IMR-90 (cell line): ENCODE measurements at regions of chr19 and their contacts with region 1.

Region 1: DNA sequence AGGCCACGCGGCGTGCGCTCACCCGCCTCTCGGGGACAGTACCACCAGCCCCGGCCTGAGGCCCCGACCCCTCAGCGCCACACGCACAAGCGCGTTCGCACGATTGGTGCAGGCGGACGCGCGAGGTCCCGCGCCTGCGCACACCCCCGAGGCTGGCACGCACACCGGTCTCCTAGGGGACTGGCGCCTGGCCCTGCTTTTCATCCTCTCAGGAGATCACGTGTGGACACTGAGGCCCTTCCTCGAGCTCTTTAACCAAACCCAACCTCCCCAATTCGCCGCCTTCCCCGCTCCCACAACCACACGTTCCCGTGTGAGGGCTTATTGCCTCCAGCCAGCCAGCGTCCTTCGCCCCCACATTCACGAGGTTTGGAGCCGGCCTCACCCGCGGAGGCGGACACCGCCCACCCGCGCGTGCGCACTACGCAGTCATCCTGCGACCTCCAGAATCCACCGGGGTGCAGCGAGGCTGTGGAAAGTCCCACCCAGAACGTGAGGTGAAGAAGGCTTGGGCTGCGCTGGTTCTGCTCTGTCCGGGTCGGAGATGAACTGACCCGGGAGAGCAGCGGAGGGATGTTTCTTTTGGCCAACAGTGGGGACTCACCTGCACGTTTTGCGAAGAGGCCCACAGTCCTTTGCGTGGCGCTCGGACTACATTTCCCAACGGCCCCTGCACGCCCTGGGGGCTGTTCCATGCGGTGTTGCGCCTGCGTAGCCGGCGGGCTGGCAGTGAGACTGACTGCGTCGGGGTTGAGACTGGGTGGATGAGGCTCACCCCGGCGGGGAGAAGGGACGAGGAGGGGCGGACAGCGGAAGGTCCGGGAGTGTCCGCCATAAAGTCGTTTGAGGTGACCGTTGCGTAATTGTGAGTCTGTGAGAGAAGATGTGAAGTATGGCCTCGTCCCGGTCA is 539 bp upstream of the ZNF667 start:
- DNase-seq: peak; percentile 91
- ATAC-seq: peak; percentile 90
- H3K4me3 ChIP-seq: peak overlapping the region; percentile 70
- H3K27ac ChIP-seq: peak overlapping the region; percentile 78
- H3K4me1 ChIP-seq: no peaks in the 10 kb centered on the region
- H3K27me3 ChIP-seq: no peaks in the 10 kb centered on the region
- CTCF ChIP-seq: no peak; the same call in 1 of the 2 replicates
- POLR2A ChIP-seq: peak; percentile 72
- RAD21 ChIP-seq: no peak; the same call in 1 of the 2 replicates

Region 2: DNA sequence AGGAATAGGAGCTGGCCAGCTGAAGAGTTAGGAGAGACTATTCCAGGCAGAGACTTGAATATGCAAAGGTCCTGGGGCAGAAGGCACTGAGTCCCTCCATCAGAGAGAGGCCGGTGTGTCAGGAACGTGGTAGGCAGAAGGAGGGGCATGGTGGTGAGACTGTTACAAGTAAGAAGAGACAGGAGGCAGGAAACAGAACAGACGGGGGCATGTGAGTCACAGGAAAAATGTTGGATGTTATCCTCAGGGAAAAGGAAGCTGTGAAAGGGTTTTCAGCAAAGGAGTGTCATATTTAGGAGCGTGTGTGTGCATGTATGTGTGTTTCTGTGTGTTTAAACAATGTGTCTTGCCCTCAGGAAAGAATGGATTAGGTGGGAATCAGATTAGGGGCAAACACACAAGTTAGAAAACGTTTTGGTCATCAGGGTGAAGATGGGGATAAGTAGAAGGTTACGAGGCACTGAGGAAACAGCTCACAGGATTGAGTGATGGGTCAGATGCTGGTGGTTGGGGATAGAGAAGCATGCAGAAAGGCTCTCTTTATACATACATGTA is 204.0 kb before region 1 on chr19:
- CTCF ChIA-PET with region 1: no interaction called
- POLR2A ChIA-PET with region 1: no interaction called
- dilution Hi-C with region 1: no loop called
- in situ Hi-C with region 1: no loop called
- intact Hi-C with region 1: no loop called
- DNase-seq: peak; percentile 45
- ATAC-seq: peak; percentile 27
- H3K4me3 ChIP-seq: no peak overlapping the region
- H3K27ac ChIP-seq: no peak overlapping the region
- H3K4me1 ChIP-seq: no peaks in the 10 kb centered on the region
- H3K27me3 ChIP-seq: no peaks in the 10 kb centered on the region
- CTCF ChIP-seq: no peak
- POLR2A ChIP-seq: no peak
- RAD21 ChIP-seq: no peak

Region 3: GRCh38 chr19:56403764-56404704 is 73.7 kb before region 1 on chr19 and contains the start of gene ZNF583:
- CTCF ChIA-PET with region 1: no interaction called
- POLR2A ChIA-PET with region 1: no interaction called
- dilution Hi-C with region 1: no loop called
- in situ Hi-C with region 1: no loop called
- intact Hi-C with region 1: loop called (anchors 2 kb)
- DNase-seq: peak; percentile 97
- ATAC-seq: peak; percentile 97
- H3K4me3 ChIP-seq: peak within 1 kb of the TSS; percentile 79
- H3K27ac ChIP-seq: peak within 1 kb of the TSS; percentile 95
- H3K4me1 ChIP-seq: no peaks in the 10 kb centered on the region
- H3K27me3 ChIP-seq: no peaks in the 10 kb centered on the region
- CTCF ChIP-seq: no peak
- POLR2A ChIP-seq: peak; percentile 26; the same call in 1 of the 2 replicates
- RAD21 ChIP-seq: no peak
- total RNA-seq, gene ZNF583: 5.4 and 6.9 TPM in 2 replicates

Region 4: DNA sequence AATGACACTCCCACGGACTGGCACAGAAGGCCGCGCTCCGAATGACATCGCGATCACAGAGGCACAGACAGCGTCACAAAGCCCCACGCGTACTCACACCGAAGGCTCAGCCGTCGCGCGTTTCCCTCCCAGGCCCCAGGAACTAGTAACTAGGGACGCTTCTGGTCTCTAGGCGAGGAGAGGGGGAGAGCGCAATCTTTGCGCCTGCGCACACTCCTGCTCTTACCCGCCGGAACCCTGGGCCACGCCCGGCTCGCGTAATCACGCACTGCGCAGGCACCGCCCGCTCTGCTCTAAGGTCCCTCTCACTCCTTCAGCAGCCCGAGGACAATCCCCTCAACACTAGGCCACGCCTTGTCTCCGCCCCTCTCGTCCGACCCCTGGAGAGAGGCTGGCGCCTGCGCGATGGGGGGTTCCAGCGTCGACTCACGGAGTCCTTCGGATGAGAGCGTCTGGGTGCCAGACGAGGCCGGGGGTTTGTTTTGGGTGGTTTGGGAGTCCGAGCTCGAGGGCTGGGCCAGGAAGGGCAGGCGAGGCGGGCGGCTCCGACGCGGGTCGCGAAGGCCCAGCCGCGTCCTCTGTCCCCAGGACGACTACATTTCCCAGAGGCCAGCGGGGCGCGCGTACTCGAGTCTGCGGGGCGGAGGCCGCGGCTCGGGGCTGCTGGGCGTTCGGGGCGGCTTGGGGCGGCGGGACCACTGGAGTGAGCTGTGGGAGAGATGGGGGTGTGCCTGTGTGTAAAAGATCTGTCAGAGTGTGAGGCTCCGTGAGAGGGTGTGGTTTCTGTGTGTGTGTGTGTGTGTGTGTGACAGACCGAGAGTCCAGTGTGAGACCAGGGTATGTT is 30.0 kb after region 1 on chr19 and contains the start of gene ZNF471:
- CTCF ChIA-PET with region 1: no interaction called
- POLR2A ChIA-PET with region 1: no interaction called
- dilution Hi-C with region 1: no loop called
- in situ Hi-C with region 1: no loop called
- intact Hi-C with region 1: loop called (anchors 2 kb)
- DNase-seq: peak; percentile 98
- ATAC-seq: peak; percentile 100
- H3K4me3 ChIP-seq: peak within 1 kb of the TSS; percentile 66
- H3K27ac ChIP-seq: peak within 1 kb of the TSS; percentile 92
- H3K4me1 ChIP-seq: peaks cover 3% of the 10 kb centered on the region
- H3K27me3 ChIP-seq: no peaks in the 10 kb centered on the region
- CTCF ChIP-seq: no peak
- POLR2A ChIP-seq: peak; percentile 38; the same call in 1 of the 2 replicates
- RAD21 ChIP-seq: no peak
- total RNA-seq, gene ZNF471: 2.3 and 2.8 TPM in 2 replicates

Region 5: DNA sequence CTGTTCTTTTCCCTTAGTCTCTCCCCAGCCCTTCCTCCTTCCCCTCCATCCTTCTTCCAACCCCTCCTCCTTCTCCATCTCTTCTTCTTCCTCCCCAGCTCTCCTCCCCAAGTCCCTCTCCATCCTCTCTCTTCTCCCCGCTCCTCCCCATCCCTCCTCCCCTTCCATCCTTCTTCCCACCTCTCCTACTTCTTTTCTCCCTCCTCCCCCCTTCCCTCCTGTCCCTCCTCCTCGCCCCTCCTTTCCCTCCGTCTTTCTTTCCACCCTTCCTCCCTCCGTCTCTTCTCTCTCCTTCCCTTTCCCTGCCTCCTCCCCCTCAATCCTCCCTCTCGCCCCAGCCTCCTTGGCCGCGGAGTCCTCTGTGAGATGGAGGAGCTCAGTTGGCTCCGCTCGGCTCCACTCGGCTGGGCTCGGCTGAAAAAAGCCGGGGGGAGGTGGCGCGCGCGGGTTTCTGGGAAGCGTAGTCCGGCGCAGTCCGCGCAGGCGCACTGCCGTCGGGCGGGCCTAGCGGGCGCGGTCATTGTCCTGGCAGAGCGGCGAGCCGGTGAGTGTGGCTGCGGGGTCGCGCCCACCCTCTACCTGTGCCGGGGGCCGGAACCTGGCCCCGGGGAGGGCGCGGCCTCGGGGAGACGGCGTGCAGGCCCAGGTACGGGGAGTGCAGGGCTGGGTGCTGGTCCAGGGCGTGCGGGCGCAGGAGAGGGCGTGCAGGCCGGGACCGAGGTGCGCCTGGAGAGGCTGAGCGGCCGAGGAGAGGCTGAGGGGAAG is 117.3 kb after region 1 on chr19 and contains the start of gene ZNF71:
- CTCF ChIA-PET with region 1: no interaction called
- POLR2A ChIA-PET with region 1: no interaction called
- dilution Hi-C with region 1: no loop called
- in situ Hi-C with region 1: no loop called
- intact Hi-C with region 1: loop called (anchors 10 kb)
- DNase-seq: peak; percentile 78
- ATAC-seq: peak; percentile 98
- H3K4me3 ChIP-seq: peak within 1 kb of the TSS; percentile 96
- H3K27ac ChIP-seq: peak within 1 kb of the TSS; percentile 87
- H3K4me1 ChIP-seq: peaks cover 2% of the 10 kb centered on the region; the same call in 1 of the 2 replicates
- H3K27me3 ChIP-seq: no peaks in the 10 kb centered on the region
- CTCF ChIP-seq: no peak
- POLR2A ChIP-seq: no peak
- RAD21 ChIP-seq: no peak
- total RNA-seq, gene ZNF71: 7.5 and 9.3 TPM in 2 replicates